IMR-90 (cell line): ENCODE measurements at regions of chr18 and their contacts with region 1.

Region 1: GRCh38 chr18:11733031-11733430 is 44.0 kb downstream of the GNAL start:
- DNase-seq: peak; percentile 57
- ATAC-seq: peak; percentile 99
- H3K4me3 ChIP-seq: peak overlapping the region; percentile 39
- H3K27ac ChIP-seq: no peak overlapping the region
- H3K4me1 ChIP-seq: no peaks in the 10 kb centered on the region
- H3K27me3 ChIP-seq: peaks cover 27% of the 10 kb centered on the region
- CTCF ChIP-seq: peak; percentile 91
- POLR2A ChIP-seq: no peak
- RAD21 ChIP-seq: peak; percentile 94

Region 2: GRCh38 chr18:11654736-11655605 is 78.1 kb before region 1 on chr18:
- CTCF ChIA-PET with region 1: interaction called, 6 read pairs
- POLR2A ChIA-PET with region 1: no interaction called
- dilution Hi-C with region 1: no loop called
- in situ Hi-C with region 1: no loop called
- intact Hi-C with region 1: loop called (anchors 5 kb)
- DNase-seq: peak; percentile 4
- ATAC-seq: peak; percentile 93
- H3K4me3 ChIP-seq: no peak overlapping the region
- H3K27ac ChIP-seq: no peak overlapping the region
- H3K4me1 ChIP-seq: no peaks in the 10 kb centered on the region
- H3K27me3 ChIP-seq: peaks cover 44% of the 10 kb centered on the region
- CTCF ChIP-seq: peak; percentile 64
- POLR2A ChIP-seq: no peak
- RAD21 ChIP-seq: peak; percentile 75

Region 3: DNA sequence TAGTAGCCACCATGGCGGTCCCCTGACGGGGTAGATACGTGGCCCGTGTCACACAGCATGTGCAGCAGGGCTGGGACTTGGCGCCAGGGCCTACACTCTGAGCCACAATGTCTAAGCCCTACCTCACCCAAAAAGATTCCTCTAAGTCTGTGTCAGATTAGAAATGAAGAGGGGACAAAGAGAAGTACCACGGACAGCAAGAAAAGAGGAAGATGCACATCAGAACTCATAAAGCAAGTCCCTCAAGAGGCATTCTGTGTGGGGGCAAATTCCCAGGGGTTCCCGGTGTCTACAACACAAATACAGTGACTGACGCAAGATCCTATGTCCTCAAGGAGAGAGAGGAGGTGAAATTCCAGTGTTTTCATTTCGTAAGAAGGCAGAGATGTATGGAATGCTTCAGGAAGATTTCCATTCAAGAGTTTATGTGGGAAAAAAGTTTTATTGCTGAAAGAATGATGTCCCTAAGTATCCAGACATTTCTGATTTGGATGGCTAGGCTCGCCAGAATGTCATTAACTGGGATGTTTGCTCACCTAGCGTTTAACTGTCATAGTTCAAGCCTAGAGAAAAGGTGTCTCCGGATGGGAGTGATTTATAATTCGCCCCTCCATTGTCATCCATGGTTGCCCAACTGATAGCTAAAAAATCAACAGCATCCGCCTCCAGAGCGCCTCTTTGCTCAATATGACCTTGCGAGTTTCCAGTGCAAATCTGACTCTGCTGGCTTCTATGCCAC is 42.6 kb after region 1 on chr18:
- CTCF ChIA-PET with region 1: no interaction called
- POLR2A ChIA-PET with region 1: no interaction called
- dilution Hi-C with region 1: no loop called
- in situ Hi-C with region 1: no loop called
- intact Hi-C with region 1: no loop called
- DNase-seq: no peak
- ATAC-seq: no peak
- H3K4me3 ChIP-seq: no peak overlapping the region
- H3K27ac ChIP-seq: no peak overlapping the region
- H3K4me1 ChIP-seq: no peaks in the 10 kb centered on the region
- H3K27me3 ChIP-seq: peaks cover 13% of the 10 kb centered on the region
- CTCF ChIP-seq: no peak
- POLR2A ChIP-seq: no peak
- RAD21 ChIP-seq: no peak

Region 4: DNA sequence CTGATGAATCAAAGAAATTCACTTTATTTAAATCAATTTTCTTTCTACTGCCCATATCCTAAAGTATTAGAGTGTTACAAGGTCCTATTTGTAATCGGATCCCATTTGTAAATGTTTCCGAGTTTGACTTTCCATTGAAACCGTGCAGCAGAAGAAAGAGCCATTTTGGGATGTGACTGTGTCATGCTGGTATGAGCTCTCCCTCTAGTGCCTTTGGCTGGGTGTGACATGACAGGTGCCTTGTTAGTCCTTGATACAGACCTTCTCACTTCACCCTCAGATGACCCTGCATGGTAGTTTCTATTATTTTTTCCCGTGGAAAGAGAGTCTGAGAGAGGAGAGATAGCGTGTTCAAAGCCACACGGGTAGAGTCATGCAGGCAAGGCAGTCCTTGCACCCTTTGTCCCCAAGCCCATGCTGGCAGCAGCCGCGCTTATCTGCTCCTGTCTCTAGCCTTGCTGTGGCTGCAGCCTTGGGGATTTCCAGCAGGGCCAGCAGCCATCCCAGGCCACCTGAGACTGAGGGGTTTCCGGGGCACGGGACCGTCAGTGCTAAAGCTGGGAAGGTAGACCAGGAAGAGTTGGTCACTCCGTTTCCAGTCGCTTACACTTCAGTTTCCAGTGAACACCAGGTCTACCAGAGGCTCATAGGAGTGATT is 139.6 kb after region 1 on chr18:
- CTCF ChIA-PET with region 1: no interaction called
- POLR2A ChIA-PET with region 1: no interaction called
- dilution Hi-C with region 1: no loop called
- in situ Hi-C with region 1: no loop called
- intact Hi-C with region 1: loop called (anchors 1 kb)
- DNase-seq: no peak
- ATAC-seq: peak; percentile 53; the same call in 1 of the 2 replicates
- H3K4me3 ChIP-seq: no peak overlapping the region
- H3K27ac ChIP-seq: no peak overlapping the region
- H3K4me1 ChIP-seq: no peaks in the 10 kb centered on the region
- H3K27me3 ChIP-seq: no peaks in the 10 kb centered on the region
- CTCF ChIP-seq: peak; percentile 27
- POLR2A ChIP-seq: no peak
- RAD21 ChIP-seq: peak; percentile 42; the same call in 1 of the 2 replicates

Region 5: GRCh38 chr18:11937874-11938478 is 204.9 kb after region 1 on chr18:
- CTCF ChIA-PET with region 1: interaction called, 4 read pairs
- POLR2A ChIA-PET with region 1: no interaction called
- dilution Hi-C with region 1: no loop called
- in situ Hi-C with region 1: no loop called
- intact Hi-C with region 1: loop called (anchors 2 kb)
- DNase-seq: peak; percentile 61
- ATAC-seq: peak; percentile 86
- H3K4me3 ChIP-seq: no peak overlapping the region
- H3K27ac ChIP-seq: no peak overlapping the region
- H3K4me1 ChIP-seq: peaks cover 2% of the 10 kb centered on the region; the same call in 1 of the 2 replicates
- H3K27me3 ChIP-seq: no peaks in the 10 kb centered on the region
- CTCF ChIP-seq: peak; percentile 84
- POLR2A ChIP-seq: no peak
- RAD21 ChIP-seq: peak; percentile 89

Region 6: GRCh38 chr18:12038639-12039417 is 305.8 kb after region 1 on chr18:
- CTCF ChIA-PET with region 1: interaction called, 4 read pairs
- POLR2A ChIA-PET with region 1: no interaction called
- dilution Hi-C with region 1: no loop called
- in situ Hi-C with region 1: loop called (anchors 5 kb)
- intact Hi-C with region 1: loop called (anchors 1 kb)
- DNase-seq: peak; percentile 65
- ATAC-seq: peak; percentile 95
- H3K4me3 ChIP-seq: peak overlapping the region; percentile 55
- H3K27ac ChIP-seq: peak overlapping the region; percentile 28; the same call in 1 of the 2 replicates
- H3K4me1 ChIP-seq: peaks cover 8% of the 10 kb centered on the region; the same call in 1 of the 2 replicates
- H3K27me3 ChIP-seq: no peaks in the 10 kb centered on the region
- CTCF ChIP-seq: peak; percentile 96
- POLR2A ChIP-seq: 0 out of 2 replicates have a peak, but pooled peaks have one; percentile 40
- RAD21 ChIP-seq: peak; percentile 95

Region 7: DNA sequence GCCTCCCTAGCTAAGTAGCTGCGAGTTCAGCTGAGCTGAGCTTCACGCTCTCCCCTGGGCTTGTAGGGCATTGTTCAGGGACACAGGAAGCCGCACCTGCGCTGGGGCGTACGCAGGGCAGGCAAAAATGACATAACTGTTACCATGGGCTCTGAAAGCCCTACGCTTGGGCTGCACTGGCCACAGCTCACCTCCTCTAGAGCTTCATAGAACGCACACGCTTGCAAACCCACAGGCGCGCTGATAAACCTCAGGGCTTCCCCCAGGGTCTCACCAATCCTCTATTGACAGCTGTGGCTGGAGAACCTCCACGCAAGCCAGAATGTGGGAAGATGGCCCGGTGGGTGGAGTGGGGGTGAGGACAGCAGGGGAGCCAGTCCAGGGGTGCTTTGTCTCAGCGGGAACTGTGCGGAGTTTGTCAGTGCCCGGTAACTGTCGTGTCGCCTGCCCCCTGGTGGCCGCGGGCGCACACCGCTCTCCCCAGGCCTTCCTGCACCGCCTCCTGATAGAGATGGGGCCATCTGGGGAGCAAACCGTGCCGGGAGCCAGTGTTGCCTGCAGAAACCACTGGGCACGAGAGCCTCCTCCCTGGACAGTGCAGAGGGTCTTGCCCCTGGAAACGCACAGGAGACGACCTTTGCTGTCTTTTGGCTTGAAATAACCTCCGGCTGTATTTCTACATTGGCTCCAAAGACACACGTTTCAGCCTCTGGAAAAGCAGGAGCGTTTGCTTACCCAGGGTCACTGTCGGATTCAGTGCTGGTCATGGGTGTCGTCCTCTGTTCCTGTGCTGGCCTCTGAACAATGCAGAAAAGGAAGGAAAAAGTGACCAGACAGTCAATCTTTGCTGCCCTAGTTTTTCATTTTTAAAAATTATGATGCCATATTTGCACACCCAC is 504.2 kb after region 1 on chr18:
- CTCF ChIA-PET with region 1: no interaction called
- POLR2A ChIA-PET with region 1: interaction called, 3 read pairs
- dilution Hi-C with region 1: no loop called
- in situ Hi-C with region 1: no loop called
- intact Hi-C with region 1: loop called (anchors 5 kb)
- DNase-seq: peak; percentile 36
- ATAC-seq: peak; percentile 96
- H3K4me3 ChIP-seq: no peak overlapping the region
- H3K27ac ChIP-seq: no peak overlapping the region
- H3K4me1 ChIP-seq: peaks cover 6% of the 10 kb centered on the region
- H3K27me3 ChIP-seq: peaks cover 10% of the 10 kb centered on the region
- CTCF ChIP-seq: peak; percentile 76
- POLR2A ChIP-seq: no peak
- RAD21 ChIP-seq: peak; percentile 57